Left lung (tissue), 14 donors: ENCODE measurements at regions of chr6 and their contacts with region 1.

Region 1: DNA sequence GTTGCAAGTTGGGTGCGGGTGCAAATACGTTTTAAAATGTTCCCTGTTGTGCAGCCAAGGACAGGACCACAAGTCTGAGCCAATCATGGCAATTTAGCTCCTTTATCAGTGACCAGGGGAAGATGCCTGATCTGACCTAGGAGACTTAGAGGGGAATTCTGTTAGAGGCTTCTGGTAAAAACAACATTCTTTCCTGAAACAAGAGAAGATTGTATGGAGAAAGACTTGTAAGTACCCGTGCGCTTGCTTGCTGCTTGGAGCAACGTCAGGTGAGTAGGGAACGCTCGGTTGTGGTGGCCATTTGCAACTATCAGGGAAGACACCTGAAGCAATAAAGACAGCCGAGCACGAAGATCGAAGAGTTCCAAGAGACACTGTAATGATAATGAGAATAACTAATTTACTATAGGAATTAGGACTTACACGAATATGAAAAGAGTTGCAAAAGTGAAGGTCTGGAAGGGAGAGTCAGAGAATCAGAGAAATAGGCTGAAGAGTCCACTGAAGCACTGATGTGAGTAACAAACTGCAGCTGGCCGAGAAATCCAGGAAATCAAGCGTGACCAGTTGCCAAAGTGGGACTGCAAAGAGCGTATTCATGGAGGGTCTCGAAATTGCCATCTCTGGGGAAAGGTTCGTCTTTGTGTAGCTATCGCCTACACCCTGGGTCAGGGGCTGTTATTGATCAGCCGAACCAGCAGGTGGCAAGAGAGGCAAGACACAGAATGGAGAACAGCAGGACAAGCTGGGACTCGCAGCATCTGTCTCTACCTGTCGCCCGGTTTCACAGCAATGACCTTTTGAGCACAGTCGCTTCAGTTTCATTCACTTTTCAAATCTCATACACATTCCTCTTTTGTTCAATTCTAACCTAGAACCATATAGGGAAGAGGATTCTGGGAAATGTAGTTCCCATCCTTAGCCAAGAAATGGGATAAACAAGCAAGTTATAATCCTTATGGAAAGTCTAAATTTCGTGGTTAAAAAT is 26.1 kb downstream of the LOC128125822 start:
- DNase-seq: peak in 3 of 4 donors; percentile 69 to 74 (median 74)
- ATAC-seq: peak; percentile 99
- H3K4me3 ChIP-seq: peak overlapping the region; percentile 31 to 38
- H3K27ac ChIP-seq: no peak overlapping the region
- H3K4me1 ChIP-seq: peaks cover 0 to 15% of the 10 kb centered on the region in 2 donors
- H3K27me3 ChIP-seq: no peaks in the 10 kb centered on the region
- CTCF ChIP-seq: peak; percentile 76 to 79

Region 2: DNA sequence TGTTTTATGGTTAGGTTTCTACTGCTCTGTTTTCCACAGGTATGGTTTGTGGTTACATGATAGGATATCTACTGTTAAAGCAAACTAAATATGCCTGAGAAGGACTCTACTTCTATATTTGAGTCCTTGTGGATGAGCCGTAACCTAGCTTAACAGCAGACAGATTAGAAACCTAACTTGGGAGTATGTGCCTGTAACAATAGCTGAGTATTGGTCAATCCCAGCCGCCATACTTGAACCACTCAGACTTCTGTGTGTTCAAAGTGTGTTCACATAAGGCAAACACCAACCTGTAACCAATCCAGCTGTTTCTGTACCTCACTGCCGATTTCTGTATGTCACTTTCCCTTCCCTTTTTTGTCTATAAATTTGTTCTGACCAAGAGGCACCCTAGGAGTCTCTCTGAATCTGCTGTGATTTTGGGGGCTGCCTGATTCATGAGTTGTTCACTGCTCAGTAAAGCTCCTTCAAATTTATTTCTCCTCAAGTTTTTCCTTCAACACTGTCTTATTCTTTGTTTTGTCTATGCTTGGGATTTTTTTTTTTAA is 74.3 kb after region 1 on chr6:
- intact Hi-C with region 1: no loop called
- DNase-seq: no peak
- ATAC-seq: no peak
- H3K4me3 ChIP-seq: no peak overlapping the region
- H3K27ac ChIP-seq: no peak overlapping the region
- H3K4me1 ChIP-seq: peaks cover 0 to 16% of the 10 kb centered on the region in 2 donors
- H3K27me3 ChIP-seq: no peaks in the 10 kb centered on the region
- CTCF ChIP-seq: no peak

Region 3: DNA sequence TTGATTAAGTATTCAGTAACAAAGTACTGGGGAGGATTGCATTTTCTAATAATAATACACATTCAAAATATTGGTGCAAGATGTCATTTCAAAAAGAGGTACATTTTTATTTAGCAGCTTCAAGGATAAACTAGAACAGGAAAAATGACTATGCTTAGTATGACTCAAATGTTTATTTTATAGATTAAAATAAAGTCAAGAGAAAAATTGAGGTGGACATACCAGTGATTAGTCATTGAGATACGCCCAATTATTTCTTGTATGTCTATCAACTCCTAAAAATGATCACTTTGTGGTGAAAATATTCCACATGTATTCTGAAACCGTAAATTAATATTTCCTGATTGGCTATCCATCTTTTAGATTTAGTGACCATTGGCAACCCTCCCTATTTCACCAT is 134.0 kb after region 1 on chr6:
- intact Hi-C with region 1: no loop called
- DNase-seq: no peak
- ATAC-seq: no peak
- H3K4me3 ChIP-seq: no peak overlapping the region
- H3K27ac ChIP-seq: no peak overlapping the region
- H3K4me1 ChIP-seq: no peaks in the 10 kb centered on the region
- H3K27me3 ChIP-seq: no peaks in the 10 kb centered on the region
- CTCF ChIP-seq: no peak

Region 4: GRCh38 chr6:63764318-63764916 is 166.1 kb after region 1 on chr6:
- intact Hi-C with region 1: loop called in 1 of 2 experiments (anchors 10 kb)
- DNase-seq: peak in 2 of 4 donors; percentile 46 to 62
- ATAC-seq: peak; percentile 54
- H3K4me3 ChIP-seq: no peak overlapping the region
- H3K27ac ChIP-seq: no peak overlapping the region
- H3K4me1 ChIP-seq: no peaks in the 10 kb centered on the region
- H3K27me3 ChIP-seq: no peaks in the 10 kb centered on the region
- CTCF ChIP-seq: peak; percentile 47 to 56

Region 5: DNA sequence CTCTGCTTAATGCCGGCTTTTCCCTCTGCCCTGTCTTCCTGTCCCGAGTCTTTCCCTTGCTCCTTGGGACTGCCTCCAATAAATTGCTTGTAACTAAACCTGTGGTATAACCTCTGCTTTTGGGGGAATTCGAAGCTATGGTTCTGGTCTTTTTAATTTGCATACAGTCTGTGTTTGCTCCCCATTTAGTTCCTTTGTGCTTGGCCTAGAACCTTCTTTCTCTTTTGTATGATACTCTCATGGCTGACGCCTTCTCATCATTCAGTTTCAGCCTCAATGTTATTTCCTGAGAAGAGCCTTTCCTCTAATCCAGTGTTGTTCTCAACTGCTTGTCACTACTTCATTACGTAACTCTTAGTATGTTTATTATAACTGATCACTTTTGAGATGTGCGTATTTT is 285.3 kb after region 1 on chr6:
- intact Hi-C with region 1: no loop called
- DNase-seq: no peak
- ATAC-seq: no peak
- H3K4me3 ChIP-seq: no peak overlapping the region
- H3K27ac ChIP-seq: no peak overlapping the region
- H3K4me1 ChIP-seq: no peaks in the 10 kb centered on the region
- H3K27me3 ChIP-seq: no peaks in the 10 kb centered on the region
- CTCF ChIP-seq: no peak